Gastrocnemius medialis (tissue), 4 donors: ENCODE measurements at regions of chr12 and their contacts with region 1.

Region 1: DNA sequence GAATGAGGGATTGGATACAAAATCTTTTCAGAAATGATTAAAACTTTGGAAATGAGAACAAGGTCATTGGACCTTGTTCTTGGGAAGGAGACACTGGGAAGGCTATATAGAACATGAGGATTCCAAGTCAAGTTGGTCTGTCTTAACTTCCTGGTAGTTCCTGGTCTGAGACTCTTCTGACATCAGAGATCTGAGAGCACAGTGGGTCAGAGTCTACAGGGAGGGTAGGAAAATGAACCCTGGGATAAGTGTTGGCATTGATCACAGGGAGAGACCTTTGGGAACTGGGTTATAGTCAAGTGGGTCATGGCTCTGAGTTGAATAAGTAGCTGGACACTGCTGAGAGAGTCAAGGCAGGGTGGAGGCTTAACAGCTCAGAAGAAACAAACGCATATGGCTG is 17.3 kb upstream of the KCNA1 start:
- DNase-seq: no peak
- ATAC-seq: no peak
- H3K4me3 ChIP-seq: no peak overlapping the region
- H3K27ac ChIP-seq: no peak overlapping the region
- H3K4me1 ChIP-seq: no peaks in the 10 kb centered on the region
- H3K27me3 ChIP-seq: peaks cover 16 to 22% (median 17%) of the 10 kb centered on the region in 3 donors
- CTCF ChIP-seq: no peak
- POLR2A ChIP-seq: no peak

Region 2: GRCh38 chr12:4908684-4909409 is 16.4 kb after region 1 on chr12:
- in situ Hi-C with region 1: no loop called
- intact Hi-C with region 1: loop called (anchors 1 kb)
- DNase-seq: no peak
- ATAC-seq: no peak
- H3K4me3 ChIP-seq: peak overlapping the region; percentile 41 to 55 (median 47)
- H3K27ac ChIP-seq: no peak overlapping the region
- H3K4me1 ChIP-seq: peaks cover 12 to 18% of the 10 kb centered on the region in 2 donors
- H3K27me3 ChIP-seq: peaks cover 52 to 60% (median 53%) of the 10 kb centered on the region in 3 donors
- CTCF ChIP-seq: no peak
- POLR2A ChIP-seq: no peak